ENCODE measurements at regions of chr7 and their contacts with region 1.

Region 1: DNA sequence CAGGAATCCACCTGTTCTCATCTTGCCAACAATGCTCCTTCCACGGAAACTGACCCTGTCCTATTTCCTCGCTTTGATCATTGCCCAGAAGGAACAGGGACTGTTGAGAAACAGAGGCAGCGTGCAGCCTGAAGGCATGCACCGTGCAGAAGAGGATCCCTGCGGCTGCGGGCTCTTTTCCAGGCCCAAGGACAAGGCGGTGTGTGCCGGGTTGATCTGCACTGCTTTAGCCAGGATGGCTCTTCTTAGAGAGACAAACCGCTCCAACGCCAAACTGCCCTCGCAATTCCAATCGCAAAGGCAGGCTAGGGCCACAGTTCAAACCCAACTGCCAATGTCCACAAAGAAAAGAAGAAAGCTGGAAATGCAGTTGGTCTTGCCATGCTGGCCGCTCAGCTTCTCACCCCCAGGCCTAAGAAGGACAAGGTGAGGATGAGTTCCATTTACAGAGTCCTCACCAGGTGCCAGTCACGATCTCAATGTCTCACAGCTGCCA is 26.5 kb downstream of the BRI3 start:
- DNase-seq: peak in 1 of 4 donors; percentile 62
- ATAC-seq: no peak
- H3K4me3 ChIP-seq: no peak overlapping the region
- H3K27ac ChIP-seq: no peak overlapping the region
- H3K4me1 ChIP-seq: no peaks in the 10 kb centered on the region
- H3K27me3 ChIP-seq: no peaks in the 10 kb centered on the region
- CTCF ChIP-seq: no peak

Region 2: DNA sequence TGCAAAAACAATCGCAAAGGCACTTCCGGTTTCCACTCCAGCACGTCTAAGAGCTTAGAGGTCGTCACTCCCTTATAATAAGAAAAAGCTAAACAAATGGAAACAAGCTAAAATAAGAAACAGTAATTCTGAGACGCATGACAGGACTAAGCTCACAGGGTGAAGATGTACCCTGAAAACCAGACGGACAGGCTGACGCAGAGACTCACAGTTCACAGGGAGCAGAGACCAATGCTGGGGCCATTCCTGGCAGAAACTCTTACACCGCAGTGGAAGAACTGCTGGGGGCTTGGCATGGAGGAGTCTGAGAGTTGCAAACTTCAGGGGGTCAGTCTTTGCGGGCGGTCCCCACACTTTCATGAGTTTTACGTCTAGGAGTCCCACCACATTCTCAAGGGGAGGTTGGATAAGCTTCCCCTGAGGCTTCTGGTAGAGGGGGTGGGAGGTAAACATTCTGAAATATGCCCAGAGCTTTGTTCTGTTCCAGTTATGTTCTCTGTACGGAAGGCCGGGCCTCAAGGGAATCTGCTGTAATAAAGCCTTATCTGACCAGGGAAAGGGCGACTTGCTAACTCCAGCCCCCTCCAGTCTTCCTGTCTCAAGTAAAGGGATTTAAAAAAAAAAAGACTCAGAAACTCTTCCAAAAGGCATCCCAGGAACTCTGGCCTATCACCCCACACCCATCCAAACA is 21.2 kb after region 1 on chr7:
- intact Hi-C with region 1: loop called in 1 of 2 experiments (anchors 1 kb)
- DNase-seq: no peak
- ATAC-seq: no peak
- H3K4me3 ChIP-seq: no peak overlapping the region
- H3K27ac ChIP-seq: no peak overlapping the region
- H3K4me1 ChIP-seq: no peaks in the 10 kb centered on the region
- H3K27me3 ChIP-seq: peaks cover 0 to under 1% of the 10 kb centered on the region in 2 donors
- CTCF ChIP-seq: no peak

Region 3: DNA sequence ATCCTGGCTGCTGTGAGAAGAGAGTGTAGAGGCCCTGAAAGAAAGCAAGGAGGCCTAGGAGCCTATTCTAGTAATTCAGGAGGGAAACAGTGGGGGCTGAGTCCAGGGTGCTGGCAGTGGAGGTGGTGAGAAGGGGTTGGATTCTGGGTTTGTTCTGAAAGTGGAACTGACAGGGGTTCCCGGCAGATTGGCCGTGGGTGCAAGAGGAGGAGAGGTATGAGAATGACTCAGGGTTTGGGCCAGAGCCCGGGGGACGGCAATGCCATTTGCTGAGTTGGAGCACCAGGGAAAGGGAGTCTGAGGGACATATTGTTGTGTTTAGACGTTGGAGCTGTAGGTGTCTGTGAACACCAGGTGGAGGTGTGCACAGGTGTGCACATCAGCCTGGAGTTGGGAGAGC is 347.6 kb after region 1 on chr7:
- intact Hi-C with region 1: no loop called
- DNase-seq: no peak
- ATAC-seq: no peak
- H3K4me3 ChIP-seq: no peak overlapping the region
- H3K27ac ChIP-seq: no peak overlapping the region
- H3K4me1 ChIP-seq: no peaks in the 10 kb centered on the region
- H3K27me3 ChIP-seq: no peaks in the 10 kb centered on the region
- CTCF ChIP-seq: no peak

Measured in left lung (tissue), 14 donors.